ENCODE measurements at regions of chr17 and their contacts with region 1.

Region 1: GRCh38 chr17:51461578-51462004 is 201.2 kb downstream of the UTP18 start:
- DNase-seq: peak in 1 of 2 donors; percentile 44
- H3K4me3 ChIP-seq: no peak overlapping the region
- H3K27ac ChIP-seq: no peak overlapping the region
- H3K4me1 ChIP-seq: no peaks in the 10 kb centered on the region
- H3K27me3 ChIP-seq: no peaks in the 10 kb centered on the region
- CTCF ChIP-seq: peak; percentile 34 to 39

Region 2: GRCh38 chr17:51527194-51527982 is 65.8 kb after region 1 on chr17:
- intact Hi-C with region 1: loop called (anchors 10 kb)
- DNase-seq: no peak
- H3K4me3 ChIP-seq: no peak overlapping the region
- H3K27ac ChIP-seq: no peak overlapping the region
- H3K4me1 ChIP-seq: no peaks in the 10 kb centered on the region
- H3K27me3 ChIP-seq: peaks cover 0 to 4% of the 10 kb centered on the region in 2 donors
- CTCF ChIP-seq: no peak